T-cell (primary cell): ENCODE measurements at regions of chr19 and their contacts with region 1.

Region 1: GRCh38 chr19:11380653-11381534 is 3.2 kb downstream of the EPOR start:
- DNase-seq: peak; percentile 94 to 99 (median 98)
- ATAC-seq: peak; percentile 86 to 91 (median 90)
- H3K4me3 ChIP-seq: peak overlapping the region; percentile 49 to 62
- H3K4me3 Mint-ChIP-seq: peak overlapping the region; percentile 86 to 92 (median 90)
- H3K27ac ChIP-seq: peak overlapping the region; percentile 91
- H3K27ac Mint-ChIP-seq: peak overlapping the region; percentile 98
- H3K4me1 ChIP-seq: peaks cover 7 to 65% of the 10 kb centered on the region in 2 experiments
- H3K4me1 Mint-ChIP-seq: peaks cover 45 to 56% (median 51%) of the 10 kb centered on the region in 3 donors
- H3K27me3 ChIP-seq: peaks cover 0 to 35% of the 10 kb centered on the region in 2 experiments
- H3K27me3 Mint-ChIP-seq: peaks cover 0 to 17% of the 10 kb centered on the region in 2 donors

Region 2: GRCh38 chr19:11338569-11339253 is 42.2 kb before region 1 on chr19:
- CTCF ChIA-PET with region 1: interaction called in 1 of 2 experiments, 9 read pairs
- POLR2A ChIA-PET with region 1: interaction called in 1 of 2 experiments, 11 read pairs
- DNase-seq: no peak
- ATAC-seq: peak in 2 of 4 experiments; percentile 16 to 22
- H3K4me3 ChIP-seq: peak overlapping the region; percentile 52 to 58
- H3K4me3 Mint-ChIP-seq: peak overlapping the region; percentile 79 to 80 (median 79)
- H3K27ac ChIP-seq: peak overlapping the region; percentile 23
- H3K27ac Mint-ChIP-seq: peak overlapping the region; percentile 81 to 84
- H3K4me1 ChIP-seq: peaks cover 0 to 33% of the 10 kb centered on the region in 2 experiments
- H3K4me1 Mint-ChIP-seq: peaks cover 11 to 26% (median 25%) of the 10 kb centered on the region in 3 donors
- H3K27me3 ChIP-seq: peaks cover 0 to 3% of the 10 kb centered on the region in 2 experiments
- H3K27me3 Mint-ChIP-seq: no peaks in the 10 kb centered on the region

Region 3: DNA sequence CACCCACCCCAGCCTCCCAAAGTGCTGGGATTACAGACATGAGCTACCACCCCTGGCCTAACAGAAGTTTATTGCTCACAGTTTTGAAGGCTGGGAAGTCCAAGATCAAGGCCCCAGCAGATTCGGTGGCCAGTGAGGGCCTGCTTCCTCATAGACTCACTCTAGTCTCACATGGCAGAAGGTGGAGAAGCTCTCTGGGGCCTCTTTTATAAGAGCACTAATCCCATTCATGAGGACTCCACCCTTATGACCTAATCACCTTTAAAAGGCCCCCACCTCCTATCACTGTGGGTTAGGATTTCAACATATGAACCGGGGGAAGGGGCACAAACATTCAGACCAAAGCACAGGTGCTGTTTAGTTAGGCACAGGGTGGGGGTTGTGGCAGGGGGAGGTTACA is 13.4 kb before region 1 on chr19:
- CTCF ChIA-PET with region 1: interaction called, 5 to 12 read pairs
- POLR2A ChIA-PET with region 1: interaction called in 1 of 2 experiments, 4 read pairs
- DNase-seq: no peak
- ATAC-seq: no peak
- H3K4me3 ChIP-seq: no peak overlapping the region
- H3K4me3 Mint-ChIP-seq: no peak overlapping the region
- H3K27ac ChIP-seq: no peak overlapping the region
- H3K27ac Mint-ChIP-seq: no peak overlapping the region
- H3K4me1 ChIP-seq: no peaks in the 10 kb centered on the region
- H3K4me1 Mint-ChIP-seq: no peaks in the 10 kb centered on the region
- H3K27me3 ChIP-seq: no peaks in the 10 kb centered on the region
- H3K27me3 Mint-ChIP-seq: no peaks in the 10 kb centered on the region

Region 4: GRCh38 chr19:11397089-11397610 is 16.3 kb after region 1 on chr19:
- CTCF ChIA-PET with region 1: no interaction called
- POLR2A ChIA-PET with region 1: no interaction called
- DNase-seq: no peak
- ATAC-seq: no peak
- H3K4me3 ChIP-seq: no peak overlapping the region
- H3K4me3 Mint-ChIP-seq: no peak overlapping the region
- H3K27ac ChIP-seq: no peak overlapping the region
- H3K27ac Mint-ChIP-seq: no peak overlapping the region
- H3K4me1 ChIP-seq: no peaks in the 10 kb centered on the region
- H3K4me1 Mint-ChIP-seq: peaks cover 0 to 4% (median 0%) of the 10 kb centered on the region in 3 donors
- H3K27me3 ChIP-seq: peaks cover 0 to 15% of the 10 kb centered on the region in 2 experiments
- H3K27me3 Mint-ChIP-seq: peaks cover 6 to 10% of the 10 kb centered on the region in 2 donors

Region 5: GRCh38 chr19:11435058-11435832 is 54.4 kb after region 1 on chr19 and contains the starts of genes ODAD3 and PRKCSH:
- CTCF ChIA-PET with region 1: interaction called in 1 of 2 experiments, 24 read pairs
- POLR2A ChIA-PET with region 1: interaction called in 1 of 2 experiments, 6 read pairs
- DNase-seq: peak; percentile 91 to 99 (median 96)
- ATAC-seq: peak; percentile 93 to 97 (median 95)
- H3K4me3 ChIP-seq: peak within 1 kb of the TSS; percentile 92 to 96
- H3K4me3 Mint-ChIP-seq: peak within 1 kb of the TSS; percentile 98 to 99 (median 99)
- H3K27ac ChIP-seq: peak within 1 kb of the TSS; percentile 75
- H3K27ac Mint-ChIP-seq: peak within 1 kb of the TSS; percentile 94 to 98
- H3K4me1 ChIP-seq: peaks cover 6 to 27% of the 10 kb centered on the region in 2 experiments
- H3K4me1 Mint-ChIP-seq: peaks cover 23 to 31% (median 25%) of the 10 kb centered on the region in 3 donors
- H3K27me3 ChIP-seq: peaks cover 0 to 9% of the 10 kb centered on the region in 2 experiments
- H3K27me3 Mint-ChIP-seq: peaks cover 0 to 6% of the 10 kb centered on the region in 2 donors
- total RNA-seq, gene ODAD3: 0.20 TPM in 1 of 5 donors, not detected in the others
- total RNA-seq, gene PRKCSH: 248 to 382 (median 334) TPM

Region 6: GRCh38 chr19:11597202-11598102 is 216.6 kb after region 1 on chr19 and contains the start of gene ZNF627:
- CTCF ChIA-PET with region 1: no interaction called
- POLR2A ChIA-PET with region 1: interaction called in 1 of 2 experiments, 10 read pairs
- DNase-seq: peak; percentile 90 to 99 (median 97)
- ATAC-seq: peak; percentile 99 to 100 (median 100)
- H3K4me3 ChIP-seq: peak within 1 kb of the TSS; percentile 88 to 99
- H3K4me3 Mint-ChIP-seq: peak within 1 kb of the TSS; percentile 86 to 90 (median 88)
- H3K27ac ChIP-seq: peak within 1 kb of the TSS; percentile 91
- H3K27ac Mint-ChIP-seq: peak within 1 kb of the TSS; percentile 75 to 80
- H3K4me1 ChIP-seq: peaks cover 8 to 19% of the 10 kb centered on the region in 2 experiments
- H3K4me1 Mint-ChIP-seq: peaks cover 23 to 30% (median 27%) of the 10 kb centered on the region in 3 donors
- H3K27me3 ChIP-seq: no peaks in the 10 kb centered on the region
- H3K27me3 Mint-ChIP-seq: no peaks in the 10 kb centered on the region
- total RNA-seq, gene ZNF627: 5.6 to 11.9 (median 10.6) TPM